ENCODE measurements at regions of chr4 and their contacts with region 1.

Region 1: DNA sequence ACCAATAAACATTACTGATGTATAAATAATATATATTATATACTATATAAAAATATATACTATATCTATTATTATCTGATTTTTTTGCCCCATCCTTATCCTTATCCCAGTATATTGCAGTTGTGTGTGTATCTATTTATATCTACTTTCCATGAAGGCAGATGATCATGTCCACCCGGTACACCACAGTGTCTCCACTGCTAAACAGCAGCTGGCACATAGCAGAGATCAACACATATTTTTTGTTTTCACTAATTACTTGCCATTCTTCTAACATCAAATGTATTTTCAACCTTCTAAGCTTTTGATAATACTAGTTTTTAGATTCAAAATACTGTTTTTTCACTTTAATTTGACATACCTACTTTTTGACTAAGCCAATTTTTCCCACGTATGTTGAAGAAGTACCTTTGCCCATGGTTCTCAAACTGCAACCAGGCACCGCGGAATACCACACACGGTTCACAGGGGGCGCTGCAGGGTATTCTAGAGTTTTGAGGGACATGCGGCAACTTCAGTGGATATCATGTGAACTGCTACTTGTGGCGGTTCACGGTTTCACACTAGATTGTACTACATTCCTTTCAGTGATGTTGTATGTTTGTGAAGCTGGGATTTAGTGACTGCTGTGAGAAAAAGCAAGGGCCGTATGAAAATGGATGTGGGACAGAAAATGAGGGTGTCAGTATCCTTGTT is 182.5 kb upstream of the NPY2R start:
- DNase-seq: peak; percentile 79
- ATAC-seq: peak; percentile 94
- H3K4me3 ChIP-seq: no peak overlapping the region
- H3K27ac ChIP-seq: peak overlapping the region; percentile 18; the same call in 1 of the 2 replicates
- H3K4me1 ChIP-seq: peaks cover 7% of the 10 kb centered on the region; the same call in 1 of the 2 replicates
- H3K27me3 ChIP-seq: no peaks in the 10 kb centered on the region
- CTCF ChIP-seq: peak; percentile 84

Region 2: GRCh38 chr4:155005395-155006090 is 20.4 kb before region 1 on chr4:
- CTCF ChIA-PET with region 1: no interaction called
- POLR2A ChIA-PET with region 1: no interaction called
- intact Hi-C with region 1: no loop called
- DNase-seq: peak; percentile 47
- ATAC-seq: peak; percentile 67; the same call in 1 of the 2 replicates
- H3K4me3 ChIP-seq: no peak overlapping the region
- H3K27ac ChIP-seq: no peak overlapping the region
- H3K4me1 ChIP-seq: no peaks in the 10 kb centered on the region; the same call in 1 of the 2 replicates
- H3K27me3 ChIP-seq: no peaks in the 10 kb centered on the region
- CTCF ChIP-seq: no peak

Region 3: GRCh38 chr4:155079871-155080270 is 54.0 kb after region 1 on chr4:
- CTCF ChIA-PET with region 1: no interaction called
- POLR2A ChIA-PET with region 1: no interaction called
- intact Hi-C with region 1: loop called (anchors 5 kb)
- DNase-seq: peak; percentile 78
- ATAC-seq: peak; percentile 78
- H3K4me3 ChIP-seq: no peak overlapping the region
- H3K27ac ChIP-seq: peak overlapping the region; percentile 30; the same call in 1 of the 2 replicates
- H3K4me1 ChIP-seq: peaks cover 13% of the 10 kb centered on the region
- H3K27me3 ChIP-seq: no peaks in the 10 kb centered on the region
- CTCF ChIP-seq: no peak

Region 4: DNA sequence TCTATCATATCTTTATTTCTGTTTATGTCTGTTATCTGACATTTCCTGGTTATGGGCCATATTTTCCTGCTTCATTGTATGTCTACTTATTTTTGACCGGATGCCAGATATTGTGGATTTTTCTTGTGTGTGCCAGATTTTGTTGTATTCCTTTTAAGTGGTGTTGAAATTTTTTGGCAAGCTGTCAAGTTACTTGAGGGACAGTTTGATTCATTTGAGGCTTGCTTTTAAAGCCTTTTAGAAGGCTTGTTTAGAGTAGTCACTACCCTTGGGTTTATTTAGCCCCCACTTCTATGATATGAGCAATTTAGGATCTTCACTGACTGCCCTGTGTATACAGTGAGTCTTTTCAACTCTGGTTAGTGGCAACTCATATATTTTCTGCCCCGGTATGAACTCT is 153.3 kb after region 1 on chr4:
- CTCF ChIA-PET with region 1: no interaction called
- POLR2A ChIA-PET with region 1: no interaction called
- intact Hi-C with region 1: loop called (anchors 10 kb)
- DNase-seq: peak; percentile 83
- ATAC-seq: 0 out of 2 replicates have a peak, but pooled peaks have one; percentile 29
- H3K4me3 ChIP-seq: no peak overlapping the region
- H3K27ac ChIP-seq: no peak overlapping the region
- H3K4me1 ChIP-seq: peaks cover 5% of the 10 kb centered on the region
- H3K27me3 ChIP-seq: no peaks in the 10 kb centered on the region
- CTCF ChIP-seq: no peak

Region 5: GRCh38 chr4:155207534-155208257 is 181.8 kb after region 1 on chr4:
- CTCF ChIA-PET with region 1: no interaction called
- POLR2A ChIA-PET with region 1: no interaction called
- intact Hi-C with region 1: loop called (anchors 2 kb)
- DNase-seq: peak; percentile 64
- ATAC-seq: peak; percentile 89
- H3K4me3 ChIP-seq: peak overlapping the region; percentile 68
- H3K27ac ChIP-seq: no peak overlapping the region
- H3K4me1 ChIP-seq: no peaks in the 10 kb centered on the region; the same call in 1 of the 2 replicates
- H3K27me3 ChIP-seq: peaks cover 22% of the 10 kb centered on the region; the same call in 1 of the 2 replicates
- CTCF ChIP-seq: peak; percentile 47

Region 6: GRCh38 chr4:155248002-155248896 is 222.3 kb after region 1 on chr4:
- CTCF ChIA-PET with region 1: interaction called, 3 read pairs
- POLR2A ChIA-PET with region 1: no interaction called
- intact Hi-C with region 1: loop called (anchors 5 kb)
- DNase-seq: peak; percentile 91
- ATAC-seq: peak; percentile 61
- H3K4me3 ChIP-seq: peak overlapping the region; percentile 57
- H3K27ac ChIP-seq: peak overlapping the region; percentile 99
- H3K4me1 ChIP-seq: peaks cover 27% of the 10 kb centered on the region
- H3K27me3 ChIP-seq: no peaks in the 10 kb centered on the region
- CTCF ChIP-seq: peak; percentile 37; the same call in 1 of the 2 replicates

Region 7: GRCh38 chr4:155353923-155354540 is 328.1 kb after region 1 on chr4:
- CTCF ChIA-PET with region 1: no interaction called
- POLR2A ChIA-PET with region 1: no interaction called
- intact Hi-C with region 1: loop called (anchors 1 kb)
- DNase-seq: peak; percentile 73
- ATAC-seq: peak; percentile 84
- H3K4me3 ChIP-seq: no peak overlapping the region
- H3K27ac ChIP-seq: no peak overlapping the region
- H3K4me1 ChIP-seq: no peaks in the 10 kb centered on the region
- H3K27me3 ChIP-seq: no peaks in the 10 kb centered on the region
- CTCF ChIP-seq: peak; percentile 86

Region 8: GRCh38 chr4:155371432-155372043 is 345.6 kb after region 1 on chr4:
- CTCF ChIA-PET with region 1: no interaction called
- POLR2A ChIA-PET with region 1: no interaction called
- intact Hi-C with region 1: loop called (anchors 1 kb)
- DNase-seq: peak; percentile 61
- ATAC-seq: 0 out of 2 replicates have a peak, but pooled peaks have one; percentile 25
- H3K4me3 ChIP-seq: no peak overlapping the region
- H3K27ac ChIP-seq: no peak overlapping the region
- H3K4me1 ChIP-seq: peaks cover 14% of the 10 kb centered on the region
- H3K27me3 ChIP-seq: no peaks in the 10 kb centered on the region
- CTCF ChIP-seq: peak; percentile 59